Heart right ventricle (tissue), 16 donors: ENCODE measurements at regions of chr3 and their contacts with region 1.

Region 1: GRCh38 chr3:68931406-68932149 is 769 bp downstream of the TAFA4 start:
- DNase-seq: no peak
- ATAC-seq: no peak
- H3K4me3 ChIP-seq: no peak overlapping the region
- H3K27ac ChIP-seq: no peak overlapping the region
- H3K4me1 ChIP-seq: peaks cover 0 to 8% (median 0%) of the 10 kb centered on the region in 9 donors
- H3K27me3 ChIP-seq: peaks cover 14 to 94% (median 76%) of the 10 kb centered on the region in 7 donors
- CTCF ChIP-seq: no peak

Region 2: GRCh38 chr3:68571321-68571720 is 360.3 kb before region 1 on chr3:
- intact Hi-C with region 1: loop called in 1 of 10 experiments (anchors 5 kb)
- DNase-seq: peak in 1 of 2 donors; percentile 2
- ATAC-seq: no peak
- H3K4me3 ChIP-seq: no peak overlapping the region
- H3K27ac ChIP-seq: no peak overlapping the region
- H3K4me1 ChIP-seq: no peaks in the 10 kb centered on the region
- H3K27me3 ChIP-seq: peaks cover 0 to 7% (median 0%) of the 10 kb centered on the region in 7 donors
- CTCF ChIP-seq: no peak

Region 3: GRCh38 chr3:68676136-68676535 is 255.4 kb before region 1 on chr3:
- intact Hi-C with region 1: no loop called
- DNase-seq: no peak
- ATAC-seq: no peak
- H3K4me3 ChIP-seq: no peak overlapping the region
- H3K27ac ChIP-seq: no peak overlapping the region
- H3K4me1 ChIP-seq: no peaks in the 10 kb centered on the region
- H3K27me3 ChIP-seq: no peaks in the 10 kb centered on the region
- CTCF ChIP-seq: no peak